ENCODE measurements at regions of chr6 and their contacts with region 1.

Region 1: DNA sequence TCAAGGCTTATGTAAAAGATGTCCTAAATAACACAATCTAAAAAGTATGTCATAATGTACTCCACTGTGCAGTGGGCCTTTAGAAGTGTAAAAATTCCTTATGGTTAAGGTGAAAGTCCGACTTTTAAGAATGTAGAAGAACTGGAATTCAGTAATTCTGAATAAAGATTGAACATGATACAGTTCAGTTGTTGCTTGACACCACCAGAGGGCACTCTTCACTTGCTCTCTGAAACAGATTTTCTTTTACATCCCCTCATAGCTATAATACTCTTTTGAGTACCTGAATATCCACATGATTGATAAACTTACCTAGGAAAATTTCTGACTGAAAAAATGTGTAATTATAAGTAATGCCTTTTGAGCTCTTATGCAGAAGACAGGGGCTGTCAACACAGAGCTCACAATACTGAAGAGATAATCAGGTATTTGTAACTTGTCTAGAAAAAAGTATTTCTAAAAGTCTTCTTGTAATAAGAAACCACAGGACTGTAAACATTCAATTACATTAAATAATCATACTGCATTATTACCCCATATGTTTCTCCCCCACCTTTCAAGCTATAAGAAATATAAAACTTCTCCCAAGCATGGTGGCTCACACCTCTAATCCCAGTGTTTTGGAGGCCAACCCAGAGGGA is 92.1 kb downstream of the POPDC3 start:
- DNase-seq: peak; percentile 63
- H3K4me3 Mint-ChIP-seq: no peak overlapping the region
- H3K27ac Mint-ChIP-seq: no peak overlapping the region
- H3K4me1 Mint-ChIP-seq: peaks cover 6% of the 10 kb centered on the region
- H3K27me3 Mint-ChIP-seq: no peaks in the 10 kb centered on the region
- CTCF ChIP-seq: peak; percentile 60

Region 2: GRCh38 chr6:104859225-104860146 is 228.2 kb before region 1 on chr6 and contains the start of gene HACE1:
- CTCF ChIA-PET with region 1: no interaction called
- POLR2A ChIA-PET with region 1: no interaction called
- intact Hi-C with region 1: no loop called
- DNase-seq: peak; percentile 90
- H3K4me3 Mint-ChIP-seq: peak within 1 kb of the TSS; percentile 88
- H3K27ac Mint-ChIP-seq: peak within 1 kb of the TSS; percentile 29
- H3K4me1 Mint-ChIP-seq: peaks cover 8% of the 10 kb centered on the region
- H3K27me3 Mint-ChIP-seq: no peaks in the 10 kb centered on the region
- CTCF ChIP-seq: no peak
- total RNA-seq, gene HACE1: 5.5 and 8.3 TPM in 2 replicates

Region 3: DNA sequence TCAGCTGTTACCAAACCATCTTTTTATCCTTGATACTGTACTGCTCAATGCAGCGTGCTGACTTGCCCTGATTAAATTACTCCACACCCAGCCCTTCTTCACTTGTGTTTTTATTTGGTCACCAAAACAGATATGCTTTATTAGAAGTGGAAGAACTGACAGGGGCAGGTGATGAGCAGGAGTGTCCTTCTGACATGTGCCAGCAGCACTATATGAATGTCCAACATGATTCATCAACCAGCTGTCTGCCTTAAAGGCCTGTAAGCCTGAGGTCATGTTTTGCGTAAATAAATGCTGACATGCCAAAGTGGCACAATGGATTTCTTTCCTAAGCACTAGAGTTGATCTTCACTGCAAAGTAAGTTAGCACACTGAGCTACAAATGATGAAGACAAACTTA is 76.7 kb after region 1 on chr6:
- CTCF ChIA-PET with region 1: interaction called, 20 read pairs
- POLR2A ChIA-PET with region 1: interaction called, 9 read pairs
- intact Hi-C with region 1: no loop called
- DNase-seq: peak; percentile 57
- H3K4me3 Mint-ChIP-seq: no peak overlapping the region
- H3K27ac Mint-ChIP-seq: no peak overlapping the region
- H3K4me1 Mint-ChIP-seq: peaks cover 10% of the 10 kb centered on the region
- H3K27me3 Mint-ChIP-seq: no peaks in the 10 kb centered on the region
- CTCF ChIP-seq: no peak

Region 4: DNA sequence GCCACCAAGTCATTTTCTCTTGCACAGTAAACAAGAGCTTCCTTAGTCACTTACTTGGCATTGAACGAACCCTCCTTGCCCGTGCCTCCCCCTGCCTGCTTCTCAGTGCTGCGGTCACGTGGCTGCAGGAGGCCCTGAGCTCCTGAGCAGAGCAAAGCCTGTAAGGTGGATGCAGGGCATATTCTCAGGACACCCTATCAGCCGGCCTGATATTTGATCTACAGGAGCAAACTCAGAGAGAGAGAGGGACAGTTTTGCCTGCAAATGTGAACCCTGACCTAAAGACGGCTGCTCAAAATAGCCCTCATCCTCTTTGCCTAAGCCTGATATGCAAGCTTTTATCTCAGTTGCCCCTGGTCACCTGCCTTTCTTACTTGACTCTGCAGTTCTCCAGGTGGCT is 185.1 kb after region 1 on chr6:
- CTCF ChIA-PET with region 1: interaction called, 20 read pairs
- POLR2A ChIA-PET with region 1: no interaction called
- intact Hi-C with region 1: loop called (anchors 1 kb)
- DNase-seq: peak; percentile 15
- H3K4me3 Mint-ChIP-seq: no peak overlapping the region
- H3K27ac Mint-ChIP-seq: no peak overlapping the region
- H3K4me1 Mint-ChIP-seq: no peaks in the 10 kb centered on the region
- H3K27me3 Mint-ChIP-seq: no peaks in the 10 kb centered on the region
- CTCF ChIP-seq: no peak

Region 5: DNA sequence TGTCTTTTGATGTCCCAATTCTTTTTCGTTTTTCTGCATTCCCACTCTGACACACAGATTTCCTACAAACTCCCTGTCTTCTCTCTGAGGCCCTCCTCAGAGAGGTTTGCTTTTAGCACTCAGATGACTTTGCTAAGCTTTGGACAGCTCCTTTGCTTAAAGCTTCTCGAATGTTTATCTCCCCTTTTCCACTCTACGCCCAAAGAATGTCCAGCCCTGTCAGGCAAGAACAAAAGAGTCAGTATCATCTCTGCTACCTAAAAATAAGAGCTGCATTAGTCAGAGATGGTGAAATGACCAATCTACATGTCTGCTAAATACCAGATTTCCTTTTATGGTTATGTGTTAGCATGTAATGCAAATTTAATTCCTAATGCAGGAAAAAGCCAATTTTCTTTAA is 258.4 kb after region 1 on chr6:
- CTCF ChIA-PET with region 1: interaction called, 9 read pairs
- POLR2A ChIA-PET with region 1: interaction called, 15 read pairs
- intact Hi-C with region 1: no loop called
- DNase-seq: peak; percentile 56
- H3K4me3 Mint-ChIP-seq: no peak overlapping the region
- H3K27ac Mint-ChIP-seq: peak overlapping the region; percentile 67
- H3K4me1 Mint-ChIP-seq: peaks cover 11% of the 10 kb centered on the region
- H3K27me3 Mint-ChIP-seq: no peaks in the 10 kb centered on the region
- CTCF ChIP-seq: no peak

Region 6: GRCh38 chr6:105374010-105374420 is 286.3 kb after region 1 on chr6:
- CTCF ChIA-PET with region 1: interaction called, 16 read pairs
- POLR2A ChIA-PET with region 1: interaction called, 11 read pairs
- intact Hi-C with region 1: no loop called
- DNase-seq: peak; percentile 71
- H3K4me3 Mint-ChIP-seq: peak overlapping the region; percentile 52
- H3K27ac Mint-ChIP-seq: peak overlapping the region; percentile 95
- H3K4me1 Mint-ChIP-seq: peaks cover 38% of the 10 kb centered on the region
- H3K27me3 Mint-ChIP-seq: no peaks in the 10 kb centered on the region
- CTCF ChIP-seq: no peak

Region 7: DNA sequence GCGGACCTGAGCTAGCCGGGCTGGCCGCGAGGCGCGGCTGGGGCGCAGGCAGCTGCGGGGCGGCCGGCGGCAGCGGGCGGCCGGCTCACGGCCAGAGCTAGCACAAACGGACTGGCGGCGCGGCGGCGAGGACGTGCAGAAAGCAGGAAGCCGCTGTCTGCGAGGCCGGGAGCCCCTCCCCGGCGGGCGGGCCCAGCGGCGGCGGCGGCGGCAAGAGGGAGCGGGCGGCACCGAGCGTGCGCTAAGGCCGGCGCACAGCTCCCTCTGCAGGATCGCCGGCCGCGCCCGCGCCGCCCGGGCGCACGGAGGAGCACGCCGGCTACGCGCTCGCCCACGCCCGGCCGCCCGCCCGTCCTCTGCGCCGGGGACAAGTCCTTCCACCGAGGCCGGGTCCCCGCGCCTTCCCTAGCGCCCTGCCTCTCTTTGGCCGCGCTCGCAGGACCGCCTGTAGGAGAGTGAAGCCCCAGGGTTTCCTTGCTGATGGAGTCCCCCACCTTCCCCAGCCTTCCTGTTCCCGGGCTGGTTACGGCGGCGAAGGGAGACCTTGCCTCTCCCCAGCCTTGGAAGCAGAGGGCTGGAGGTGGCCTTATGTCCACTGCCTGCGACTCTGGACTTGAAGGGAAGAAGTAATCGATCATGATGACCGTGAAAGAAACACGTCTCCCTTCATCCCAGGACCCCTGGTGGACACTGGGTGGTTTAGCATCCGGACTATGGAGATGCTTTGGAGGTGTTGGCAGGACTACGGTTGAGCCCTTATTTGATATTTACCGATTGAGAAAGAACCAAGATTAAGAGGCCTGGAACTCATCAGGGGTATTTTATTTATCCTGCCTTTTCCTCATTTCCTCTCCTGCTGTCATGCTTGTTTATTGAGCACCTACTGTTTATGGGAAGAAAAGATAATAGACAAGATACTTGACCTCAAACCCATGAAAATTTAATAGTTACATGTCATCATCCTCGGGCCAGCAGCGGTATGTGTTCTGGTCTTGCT is 315.5 kb after region 1 on chr6 and contains the start of gene PREP:
- CTCF ChIA-PET with region 1: interaction called, 33 read pairs
- POLR2A ChIA-PET with region 1: interaction called, 15 read pairs
- intact Hi-C with region 1: loop called (anchors 1 kb)
- DNase-seq: peak; percentile 85
- H3K4me3 Mint-ChIP-seq: peak within 1 kb of the TSS; percentile 82
- H3K27ac Mint-ChIP-seq: peak within 1 kb of the TSS; percentile 65
- H3K4me1 Mint-ChIP-seq: peaks cover 28% of the 10 kb centered on the region
- H3K27me3 Mint-ChIP-seq: no peaks in the 10 kb centered on the region
- CTCF ChIP-seq: peak; percentile 60
- total RNA-seq, gene PREP: 57.8 and 67.6 TPM in 2 replicates

Measured in MCF 10A (cell line).